ENCODE measurements at regions of chr17 and their contacts with region 1.

Region 1: GRCh38 chr17:30291543-30292285 is at the start of gene BLMH:
- DNase-seq: peak; percentile 70

Region 2: DNA sequence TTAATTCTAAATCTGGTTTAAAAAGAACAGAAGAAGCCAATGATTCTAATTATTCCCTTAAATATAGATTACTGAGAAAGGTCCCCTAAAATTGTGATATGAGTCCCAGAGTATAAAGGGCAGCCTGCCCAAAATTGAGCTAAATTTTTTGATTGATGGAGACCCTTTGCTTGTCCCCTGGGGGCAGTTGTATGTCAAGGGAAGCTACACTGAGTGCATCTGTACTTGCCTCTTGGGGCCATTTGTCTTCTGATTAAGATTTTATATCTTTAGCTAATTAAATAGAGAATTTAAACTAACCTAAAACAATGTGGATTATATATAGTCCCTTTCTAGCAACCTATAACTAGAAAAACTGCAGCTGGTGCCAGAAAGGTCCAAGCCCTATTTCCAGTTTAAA is 12.6 kb before region 1 on chr17:
- CTCF ChIA-PET with region 1: interaction called, 3 read pairs
- POLR2A ChIA-PET with region 1: interaction called, 10 read pairs
- DNase-seq: no peak

Region 3: GRCh38 chr17:30326809-30327208 is 35.1 kb after region 1 on chr17:
- CTCF ChIA-PET with region 1: interaction called, 4 read pairs
- POLR2A ChIA-PET with region 1: interaction called, 29 read pairs
- DNase-seq: no peak